Naive thymus-derived CD4-positive, alpha-beta T cell (primary cell): ENCODE measurements at regions of chr6 and their contacts with region 1.

Region 1: DNA sequence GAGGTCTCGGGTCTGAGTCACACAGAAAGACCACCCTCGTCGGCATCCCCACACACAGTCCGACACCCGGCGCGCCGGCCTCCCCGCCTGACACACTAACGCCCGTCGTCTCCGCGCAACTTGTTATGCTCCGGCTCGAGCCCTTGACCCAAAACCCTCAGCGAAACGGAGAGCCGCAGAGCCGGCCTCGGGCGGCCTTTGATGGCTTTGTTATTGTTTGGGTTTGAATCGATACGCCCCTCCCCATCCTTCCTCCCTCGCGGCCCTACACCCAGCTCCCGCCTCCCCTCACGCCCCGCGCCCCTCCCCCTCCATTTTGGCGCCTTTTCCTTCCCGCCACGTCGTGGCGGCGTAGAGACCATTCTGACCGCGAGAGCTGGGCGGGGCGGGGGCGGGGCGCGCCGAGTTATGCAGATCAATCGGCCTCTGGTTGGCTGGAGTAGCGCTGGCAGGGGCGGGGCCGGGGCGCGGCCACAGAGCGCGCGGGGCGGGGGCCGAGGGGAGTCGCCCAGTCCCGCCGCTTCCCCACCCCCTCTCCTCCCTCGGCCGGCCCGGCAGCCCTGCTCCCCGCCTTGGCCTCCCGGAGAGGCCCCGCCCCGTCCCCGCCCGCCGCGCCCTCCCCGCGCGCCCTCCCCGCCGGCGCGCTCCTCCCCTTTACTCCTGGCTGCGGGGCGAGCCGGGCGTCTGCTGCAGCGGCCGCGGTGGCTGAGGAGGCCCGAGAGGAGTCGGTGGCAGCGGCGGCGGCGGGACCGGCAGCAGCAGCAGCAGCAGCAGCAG is at the start of gene PIM1:
- DNase-seq: peak; percentile 91 to 98 (median 95)
- ATAC-seq: peak; percentile 94
- H3K4me3 ChIP-seq: peak within 1 kb of the TSS; percentile 71
- H3K4me3 Mint-ChIP-seq: peak within 1 kb of the TSS; percentile 92 to 100 (median 94)
- H3K27ac ChIP-seq: peak within 1 kb of the TSS; percentile 86
- H3K27ac Mint-ChIP-seq: peak within 1 kb of the TSS; percentile 93 to 98 (median 96)
- H3K4me1 ChIP-seq: peaks cover 21% of the 10 kb centered on the region in 2 donors
- H3K4me1 Mint-ChIP-seq: peaks cover 19 to 40% (median 34%) of the 10 kb centered on the region in 7 donors
- H3K27me3 ChIP-seq: no peaks in the 10 kb centered on the region
- H3K27me3 Mint-ChIP-seq: no peaks in the 10 kb centered on the region
- total RNA-seq, gene PIM1: 100 to 550 (median 172) TPM

Region 2: DNA sequence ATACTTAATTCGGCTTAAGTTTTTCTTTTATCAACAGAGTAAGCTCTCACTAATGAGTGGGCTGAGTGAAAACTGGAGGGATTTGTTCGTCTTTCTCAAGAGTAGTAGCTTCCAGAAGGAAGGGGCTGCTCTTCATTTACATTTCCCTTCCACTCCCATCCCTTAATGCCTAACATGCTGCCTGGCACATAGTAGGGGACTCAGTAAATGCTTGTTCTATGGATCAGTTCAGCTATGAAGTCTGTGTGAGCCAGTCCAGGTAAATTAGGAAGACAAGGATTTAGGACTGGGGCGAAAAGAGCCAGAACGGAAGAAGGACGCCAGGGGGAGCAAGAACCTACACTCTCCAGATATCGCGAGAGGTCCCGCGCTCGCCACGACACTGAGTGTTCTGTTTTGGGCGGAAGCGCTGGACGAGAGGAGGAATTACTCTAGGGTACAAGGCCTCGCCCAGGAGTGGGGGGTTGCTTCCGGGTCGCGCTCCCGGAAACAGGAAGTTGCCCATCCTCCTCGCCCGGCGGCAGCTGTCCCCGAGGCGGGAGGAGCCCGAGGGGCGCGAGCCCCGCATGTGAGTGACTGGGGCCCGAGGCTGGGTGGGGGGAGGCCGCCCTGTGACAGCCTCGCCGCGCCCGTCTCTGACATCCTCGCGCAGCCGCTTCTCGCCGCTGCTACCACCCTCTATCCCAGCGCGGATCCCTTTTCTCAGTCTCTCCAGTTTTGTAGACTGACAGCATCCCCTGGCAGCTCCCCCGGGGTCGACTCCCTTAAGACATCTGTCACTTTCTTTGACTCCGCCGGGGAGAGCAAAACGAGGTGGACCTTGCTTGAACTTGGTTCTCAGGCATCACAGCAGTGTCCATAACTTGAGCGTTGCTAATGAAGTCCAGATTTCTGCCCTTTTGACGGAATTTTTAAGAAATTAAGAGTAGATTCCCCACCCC is 284.0 kb before region 1 on chr6 and contains the start of gene C6orf89:
- CTCF ChIA-PET with region 1: interaction called, 7 read pairs
- POLR2A ChIA-PET with region 1: interaction called, 4 read pairs
- intact Hi-C with region 1: loop called (anchors 1 kb)
- DNase-seq: peak; percentile 86 to 98 (median 95)
- ATAC-seq: peak; percentile 100
- H3K4me3 ChIP-seq: peak within 1 kb of the TSS; percentile 96
- H3K4me3 Mint-ChIP-seq: peak within 1 kb of the TSS; percentile 83 to 92 (median 90)
- H3K27ac ChIP-seq: peak within 1 kb of the TSS; percentile 81
- H3K27ac Mint-ChIP-seq: peak within 1 kb of the TSS; percentile 90 to 97 (median 95)
- H3K4me1 ChIP-seq: peaks cover 16 to 24% of the 10 kb centered on the region in 2 donors
- H3K4me1 Mint-ChIP-seq: peaks cover 25 to 47% (median 39%) of the 10 kb centered on the region in 7 donors
- H3K27me3 ChIP-seq: no peaks in the 10 kb centered on the region
- H3K27me3 Mint-ChIP-seq: no peaks in the 10 kb centered on the region
- total RNA-seq, gene C6orf89: 34.6 to 48.2 (median 47.7) TPM

Region 3: DNA sequence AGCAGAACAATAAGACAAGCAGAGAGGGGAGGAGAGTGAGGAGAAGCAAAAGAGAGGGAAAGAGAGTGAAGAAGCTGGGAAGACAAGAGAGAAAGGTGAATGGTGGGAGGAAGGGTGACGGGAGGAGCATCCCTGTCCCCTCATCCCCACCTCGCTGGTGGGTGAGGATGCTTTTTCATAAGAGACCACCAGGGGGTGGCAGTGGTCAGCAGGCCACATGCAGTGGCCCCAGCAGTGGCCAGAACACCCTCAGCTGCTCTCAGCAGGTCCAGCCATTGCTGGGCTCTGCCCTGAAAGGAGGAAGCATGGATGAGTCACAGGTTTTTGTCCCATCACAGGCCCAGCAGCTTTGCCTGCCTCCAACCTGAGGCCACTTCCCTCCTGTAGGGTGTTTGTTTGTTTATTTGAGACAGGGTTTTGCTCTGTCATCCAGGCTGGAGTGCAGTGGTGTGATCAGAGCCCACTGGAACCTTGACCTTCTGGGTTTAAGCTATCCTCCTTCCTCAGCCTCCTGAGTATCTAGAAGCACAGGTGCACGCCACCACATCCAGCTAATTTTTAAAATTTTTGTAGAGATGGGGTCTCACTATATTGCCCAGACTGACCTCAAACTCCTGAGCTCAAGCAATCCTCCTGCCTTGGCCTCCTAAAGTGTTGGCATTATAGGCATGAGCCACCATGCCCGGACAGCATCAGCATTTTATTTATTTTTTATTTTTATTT is 140.3 kb before region 1 on chr6:
- CTCF ChIA-PET with region 1: interaction called, 443 read pairs
- POLR2A ChIA-PET with region 1: interaction called, 276 read pairs
- intact Hi-C with region 1: loop called in 1 of 2 experiments (anchors 1 kb)
- DNase-seq: peak in 1 of 9 donors; percentile 54
- ATAC-seq: peak; percentile 92
- H3K4me3 ChIP-seq: no peak overlapping the region
- H3K4me3 Mint-ChIP-seq: peak overlapping the region in 1 of 10 donors; percentile 23
- H3K27ac ChIP-seq: no peak overlapping the region
- H3K27ac Mint-ChIP-seq: peak overlapping the region in 3 of 9 donors; percentile 22 to 84 (median 23)
- H3K4me1 ChIP-seq: peaks cover 5 to 14% of the 10 kb centered on the region in 2 donors
- H3K4me1 Mint-ChIP-seq: peaks cover 4 to 70% (median 14%) of the 10 kb centered on the region in 7 donors
- H3K27me3 ChIP-seq: no peaks in the 10 kb centered on the region
- H3K27me3 Mint-ChIP-seq: no peaks in the 10 kb centered on the region

Region 4: DNA sequence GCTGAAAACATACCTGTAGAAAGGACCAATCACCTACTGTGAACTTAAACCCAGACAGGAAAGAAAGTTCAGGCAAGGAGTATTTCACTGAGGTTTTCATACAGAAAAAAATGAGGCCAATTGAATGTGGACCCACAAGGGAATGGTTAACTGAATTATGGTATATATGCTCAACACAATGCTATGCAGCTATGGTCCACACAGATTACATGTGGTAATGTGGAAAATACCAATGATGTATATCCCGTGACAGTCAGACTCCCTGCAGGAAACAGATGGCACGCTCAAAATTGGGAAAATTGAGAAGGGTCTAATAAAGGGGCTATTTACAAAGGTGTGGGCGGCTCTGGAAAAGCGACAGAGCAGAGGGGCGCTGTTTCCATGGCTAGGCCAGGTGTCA is 46.8 kb before region 1 on chr6:
- CTCF ChIA-PET with region 1: no interaction called
- POLR2A ChIA-PET with region 1: no interaction called
- intact Hi-C with region 1: loop called in 1 of 2 experiments (anchors 5 kb)
- DNase-seq: no peak
- ATAC-seq: no peak
- H3K4me3 ChIP-seq: no peak overlapping the region
- H3K4me3 Mint-ChIP-seq: no peak overlapping the region
- H3K27ac ChIP-seq: no peak overlapping the region
- H3K27ac Mint-ChIP-seq: no peak overlapping the region
- H3K4me1 ChIP-seq: no peaks in the 10 kb centered on the region
- H3K4me1 Mint-ChIP-seq: peaks cover 0 to 10% (median 4%) of the 10 kb centered on the region in 7 donors
- H3K27me3 ChIP-seq: no peaks in the 10 kb centered on the region
- H3K27me3 Mint-ChIP-seq: peaks cover 4 to 14% (median 5%) of the 10 kb centered on the region in 5 donors

Region 5: GRCh38 chr6:37190159-37190535 is 20.5 kb after region 1 on chr6:
- CTCF ChIA-PET with region 1: interaction called, 12 read pairs
- POLR2A ChIA-PET with region 1: interaction called, 40 read pairs
- intact Hi-C with region 1: no loop called
- DNase-seq: no peak
- ATAC-seq: no peak
- H3K4me3 ChIP-seq: no peak overlapping the region
- H3K4me3 Mint-ChIP-seq: peak overlapping the region in 8 of 10 donors; percentile 18 to 67 (median 26)
- H3K27ac ChIP-seq: no peak overlapping the region
- H3K27ac Mint-ChIP-seq: peak overlapping the region in 6 of 9 donors; percentile 30 to 81 (median 56)
- H3K4me1 ChIP-seq: peaks cover 28 to 30% of the 10 kb centered on the region in 2 donors
- H3K4me1 Mint-ChIP-seq: peaks cover 30 to 75% (median 66%) of the 10 kb centered on the region in 7 donors
- H3K27me3 ChIP-seq: no peaks in the 10 kb centered on the region
- H3K27me3 Mint-ChIP-seq: no peaks in the 10 kb centered on the region

Region 6: DNA sequence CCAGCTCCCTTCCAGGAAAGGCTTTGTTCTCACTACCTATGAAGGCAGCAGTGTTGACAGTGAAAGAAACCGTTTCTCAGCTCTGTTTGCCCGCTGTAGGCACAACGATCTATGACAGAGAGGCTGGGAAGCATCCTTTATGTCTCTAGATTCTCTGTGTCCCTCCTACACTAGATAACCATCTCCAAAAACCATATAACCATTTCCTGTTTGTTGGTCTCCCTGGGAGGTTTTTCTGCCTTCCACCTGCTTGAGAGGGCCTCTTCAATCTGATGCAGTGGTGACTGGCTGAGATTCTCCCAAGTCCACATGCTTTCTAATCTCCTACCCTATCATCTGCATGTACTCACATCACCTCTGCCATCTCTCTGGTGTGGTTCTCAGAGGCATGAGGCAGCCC is 120.2 kb after region 1 on chr6:
- CTCF ChIA-PET with region 1: no interaction called
- POLR2A ChIA-PET with region 1: no interaction called
- intact Hi-C with region 1: loop called in 1 of 2 experiments (anchors 5 kb)
- DNase-seq: peak in 8 of 9 donors; percentile 27 to 63 (median 48)
- ATAC-seq: peak; percentile 81
- H3K4me3 ChIP-seq: no peak overlapping the region
- H3K4me3 Mint-ChIP-seq: peak overlapping the region in 8 of 10 donors; percentile 0 to 75 (median 24)
- H3K27ac ChIP-seq: peak overlapping the region; percentile 18
- H3K27ac Mint-ChIP-seq: peak overlapping the region; percentile 49 to 94 (median 77)
- H3K4me1 ChIP-seq: peaks cover 12 to 14% of the 10 kb centered on the region in 2 donors
- H3K4me1 Mint-ChIP-seq: peaks cover 18 to 57% (median 22%) of the 10 kb centered on the region in 7 donors
- H3K27me3 ChIP-seq: no peaks in the 10 kb centered on the region
- H3K27me3 Mint-ChIP-seq: no peaks in the 10 kb centered on the region